ENCODE measurements at regions of chr15 and their contacts with region 1.

Region 1: DNA sequence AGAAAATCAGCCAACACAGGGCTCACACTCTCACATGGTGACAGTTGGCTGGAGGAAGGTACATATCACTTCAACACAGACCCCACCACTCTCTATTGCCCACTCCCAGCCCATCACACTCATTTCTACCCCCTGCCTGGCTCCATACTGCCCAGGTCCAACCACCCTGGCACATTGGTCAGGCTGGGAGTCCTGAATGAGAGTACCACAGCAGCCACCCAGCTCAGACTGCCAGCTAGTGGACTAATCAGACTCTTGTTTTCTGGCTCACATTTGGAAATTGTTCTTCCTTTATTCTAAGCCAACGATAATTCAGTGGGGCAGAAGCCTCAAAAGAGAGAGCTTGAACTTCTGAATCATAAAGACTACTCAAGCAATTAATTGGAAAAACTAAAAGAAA is 20.0 kb downstream of the MRPL46 start:
- DNase-seq: no peak
- H3K4me3 ChIP-seq: no peak overlapping the region
- H3K27me3 ChIP-seq: no peaks in the 10 kb centered on the region
- CTCF ChIP-seq: no peak

Region 2: DNA sequence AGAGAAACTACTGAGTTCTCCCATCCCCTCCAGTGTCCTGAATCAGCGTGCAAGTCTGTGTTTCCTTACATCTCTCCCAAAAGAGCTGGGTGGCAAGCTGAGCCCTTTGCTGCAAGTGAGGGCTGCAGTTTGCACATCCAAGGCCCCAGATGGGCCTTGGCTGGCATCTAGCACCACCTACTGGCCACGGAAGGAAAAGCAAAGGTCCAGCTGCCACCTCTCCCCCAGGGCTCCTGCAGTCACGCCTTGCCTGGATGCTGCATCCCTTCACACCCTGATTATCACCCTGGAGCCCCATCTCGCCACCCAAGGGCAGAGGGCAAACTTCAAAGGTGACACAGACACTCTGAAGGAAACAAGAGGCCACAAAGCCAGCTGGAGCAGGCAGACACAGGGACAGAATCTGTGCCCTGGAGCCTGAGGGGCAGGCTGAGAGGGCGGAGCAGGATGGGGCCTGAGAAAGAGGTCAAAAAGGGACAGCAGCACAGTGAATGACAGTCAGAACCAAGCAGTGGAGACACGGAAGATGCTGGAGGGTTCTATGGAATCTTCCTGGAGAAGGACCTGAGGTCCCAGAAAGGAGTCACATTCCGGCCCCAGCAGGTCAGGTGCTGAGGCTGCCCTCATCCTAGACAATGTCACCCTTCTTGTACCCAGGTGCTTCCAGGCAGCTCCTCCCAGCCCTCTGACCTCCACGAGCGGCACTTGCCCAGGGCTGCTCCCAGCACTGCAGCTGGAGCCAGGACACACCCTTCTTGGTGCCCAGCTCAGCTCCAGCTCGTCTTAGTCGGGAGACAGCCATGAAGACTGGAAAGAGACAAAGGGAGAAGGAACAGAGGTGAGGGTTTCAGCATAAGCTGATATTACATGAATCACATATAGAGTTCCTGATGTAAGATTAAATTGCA is 172.4 kb before region 1 on chr15:
- CTCF ChIA-PET with region 1: interaction called, 32 read pairs
- POLR2A ChIA-PET with region 1: no interaction called
- DNase-seq: no peak
- H3K4me3 ChIP-seq: no peak overlapping the region
- H3K27me3 ChIP-seq: peaks cover 2% of the 10 kb centered on the region
- CTCF ChIP-seq: peak; percentile 91

Measured in BJ (cell line).